ENCODE measurements at regions of chr12 and their contacts with region 1.

Region 1: DNA sequence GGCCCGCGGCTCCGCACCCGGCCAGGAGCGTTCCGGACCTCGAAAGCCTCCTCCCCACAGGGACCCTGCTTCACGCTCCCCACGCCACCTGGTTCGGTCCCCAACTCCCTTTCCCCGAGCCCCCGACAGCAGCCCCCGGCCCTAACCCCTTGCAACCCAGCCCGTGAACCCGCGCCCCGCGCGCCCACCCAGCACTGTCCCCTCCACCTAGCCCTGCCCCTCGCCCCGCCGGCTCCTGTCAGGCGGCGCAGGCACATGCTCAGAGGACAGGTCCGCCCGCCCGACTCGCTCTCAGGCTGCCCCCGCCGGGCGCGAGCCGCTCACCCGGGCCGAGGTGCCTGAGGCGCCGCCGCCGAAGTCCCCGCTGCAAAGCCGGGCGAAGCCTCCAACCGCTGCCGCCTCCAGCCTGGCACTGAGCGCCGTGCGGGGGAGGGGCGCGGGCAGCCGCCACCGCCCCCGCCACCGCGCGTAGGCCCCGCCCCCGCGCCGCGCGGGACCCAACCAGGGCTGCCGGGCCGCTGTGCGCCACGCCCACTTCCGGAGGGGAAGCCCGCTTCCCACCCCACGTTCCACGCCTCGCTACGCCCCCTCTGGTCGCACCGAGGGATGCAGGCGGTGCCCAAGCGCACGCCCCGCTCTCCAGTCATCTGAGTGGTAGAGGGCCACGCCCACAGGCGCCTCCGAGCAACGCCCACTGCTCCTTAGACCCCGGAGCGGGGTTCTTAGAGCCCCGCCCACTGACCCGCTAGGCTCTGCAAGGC is at the start of gene CORO1C:
- DNase-seq: peak; percentile 98 to 99
- ATAC-seq: peak; percentile 84 to 88 (median 85)
- H3K4me3 ChIP-seq: peak within 1 kb of the TSS; percentile 74
- H3K27ac ChIP-seq: peak within 1 kb of the TSS; percentile 99
- H3K4me1 ChIP-seq: peaks cover 40% of the 10 kb centered on the region
- H3K27me3 ChIP-seq: no peaks in the 10 kb centered on the region
- CTCF ChIP-seq: peak; percentile 91
- total RNA-seq, gene CORO1C: 32.4 to 67.1 (median 59.2) TPM

Region 2: DNA sequence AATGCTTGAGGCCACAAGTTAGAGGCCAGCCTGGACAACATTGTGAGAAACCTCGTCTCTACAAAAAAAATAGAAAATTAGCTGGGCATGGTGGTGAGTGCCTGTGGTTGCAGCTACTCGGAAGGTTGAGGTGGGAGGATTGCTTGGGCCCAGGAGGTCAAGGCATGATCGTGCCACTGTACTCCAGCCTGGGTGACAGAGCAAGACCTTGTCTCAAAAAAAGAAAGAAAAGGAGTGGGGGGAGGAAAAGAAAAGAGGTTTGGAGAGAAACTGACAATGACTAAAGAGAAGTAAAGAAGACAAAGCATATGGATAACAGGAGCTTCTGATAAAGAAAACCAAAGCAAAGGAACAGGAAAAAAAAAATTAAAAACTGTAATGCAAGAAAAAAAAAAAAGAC is 60.2 kb before region 1 on chr12:
- intact Hi-C with region 1: loop called in 1 of 2 experiments (anchors 5 kb)
- DNase-seq: no peak
- ATAC-seq: no peak
- H3K4me3 ChIP-seq: no peak overlapping the region
- H3K27ac ChIP-seq: no peak overlapping the region
- H3K4me1 ChIP-seq: peaks cover 41% of the 10 kb centered on the region
- H3K27me3 ChIP-seq: no peaks in the 10 kb centered on the region
- CTCF ChIP-seq: no peak

Region 3: DNA sequence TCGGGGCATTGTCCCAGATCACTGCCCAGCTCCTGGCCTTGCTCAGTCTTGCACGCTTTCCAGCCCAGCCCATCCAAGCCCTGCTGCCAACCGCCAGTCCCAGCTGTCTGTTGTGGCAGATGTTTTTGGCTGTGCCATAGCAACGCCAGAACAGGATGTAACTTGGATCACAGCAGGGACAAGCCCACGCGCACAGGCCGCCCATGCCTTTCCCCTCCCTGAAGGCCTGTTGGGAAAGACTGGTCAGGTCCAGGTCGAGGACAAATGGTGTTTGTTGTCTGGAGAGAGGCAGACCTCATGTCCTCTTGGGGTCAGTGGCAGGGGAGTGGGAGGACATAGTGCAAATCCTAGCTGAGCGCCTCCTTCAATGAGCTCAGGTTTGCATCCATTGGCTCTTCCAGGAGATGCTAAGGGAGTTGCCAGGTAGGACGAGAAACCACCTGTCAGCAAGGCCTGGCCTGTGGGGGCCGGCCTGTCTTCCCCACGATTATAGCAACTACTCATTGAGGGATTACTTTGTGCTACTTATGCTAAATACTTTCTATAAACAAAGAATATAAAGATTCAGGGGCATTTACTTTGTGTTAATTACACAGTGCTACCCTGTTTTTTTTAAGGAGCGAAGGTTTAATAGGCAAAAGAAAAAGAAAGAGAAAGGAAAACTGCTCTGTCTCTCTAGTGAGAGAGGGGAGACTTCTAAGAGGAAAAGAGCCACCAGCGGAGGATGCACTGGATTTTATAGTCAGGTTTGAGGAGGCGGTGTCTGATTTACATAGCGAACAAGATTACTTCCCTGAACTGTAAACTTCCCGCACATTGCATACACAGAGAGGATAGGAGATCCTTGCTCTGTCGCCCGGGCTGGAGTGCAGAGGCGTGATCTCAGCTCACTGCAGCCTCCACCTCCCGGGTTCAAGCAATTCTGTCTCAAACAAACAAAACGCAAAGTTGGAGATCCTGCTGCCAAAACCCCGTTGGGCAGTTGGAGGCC is 42.8 kb after region 1 on chr12:
- intact Hi-C with region 1: loop called (anchors 2 to 5 kb)
- DNase-seq: peak; percentile 85 to 94
- ATAC-seq: peak; percentile 69 to 94 (median 92)
- H3K4me3 ChIP-seq: no peak overlapping the region
- H3K27ac ChIP-seq: peak overlapping the region; percentile 78
- H3K4me1 ChIP-seq: peaks cover 31% of the 10 kb centered on the region
- H3K27me3 ChIP-seq: no peaks in the 10 kb centered on the region
- CTCF ChIP-seq: no peak

Region 4: GRCh38 chr12:108803428-108804105 is 72.3 kb after region 1 on chr12:
- intact Hi-C with region 1: loop called in 1 of 2 experiments (anchors 5 kb)
- DNase-seq: peak in 1 of 2 donors; percentile 60
- ATAC-seq: peak; percentile 58 to 78 (median 70)
- H3K4me3 ChIP-seq: peak overlapping the region; percentile 47
- H3K27ac ChIP-seq: peak overlapping the region; percentile 91
- H3K4me1 ChIP-seq: peaks cover 58% of the 10 kb centered on the region
- H3K27me3 ChIP-seq: no peaks in the 10 kb centered on the region
- CTCF ChIP-seq: peak; percentile 97